MCF 10A (cell line): ENCODE measurements at regions of chr17 and their contacts with region 1.

Region 1: GRCh38 chr17:50297407-50297865 is 23.2 kb downstream of the TMEM92 start:
- DNase-seq: peak; percentile 84
- H3K4me3 Mint-ChIP-seq: no peak overlapping the region
- H3K27ac Mint-ChIP-seq: no peak overlapping the region
- H3K4me1 Mint-ChIP-seq: no peaks in the 10 kb centered on the region
- H3K27me3 Mint-ChIP-seq: no peaks in the 10 kb centered on the region
- CTCF ChIP-seq: peak; percentile 99

Region 2: DNA sequence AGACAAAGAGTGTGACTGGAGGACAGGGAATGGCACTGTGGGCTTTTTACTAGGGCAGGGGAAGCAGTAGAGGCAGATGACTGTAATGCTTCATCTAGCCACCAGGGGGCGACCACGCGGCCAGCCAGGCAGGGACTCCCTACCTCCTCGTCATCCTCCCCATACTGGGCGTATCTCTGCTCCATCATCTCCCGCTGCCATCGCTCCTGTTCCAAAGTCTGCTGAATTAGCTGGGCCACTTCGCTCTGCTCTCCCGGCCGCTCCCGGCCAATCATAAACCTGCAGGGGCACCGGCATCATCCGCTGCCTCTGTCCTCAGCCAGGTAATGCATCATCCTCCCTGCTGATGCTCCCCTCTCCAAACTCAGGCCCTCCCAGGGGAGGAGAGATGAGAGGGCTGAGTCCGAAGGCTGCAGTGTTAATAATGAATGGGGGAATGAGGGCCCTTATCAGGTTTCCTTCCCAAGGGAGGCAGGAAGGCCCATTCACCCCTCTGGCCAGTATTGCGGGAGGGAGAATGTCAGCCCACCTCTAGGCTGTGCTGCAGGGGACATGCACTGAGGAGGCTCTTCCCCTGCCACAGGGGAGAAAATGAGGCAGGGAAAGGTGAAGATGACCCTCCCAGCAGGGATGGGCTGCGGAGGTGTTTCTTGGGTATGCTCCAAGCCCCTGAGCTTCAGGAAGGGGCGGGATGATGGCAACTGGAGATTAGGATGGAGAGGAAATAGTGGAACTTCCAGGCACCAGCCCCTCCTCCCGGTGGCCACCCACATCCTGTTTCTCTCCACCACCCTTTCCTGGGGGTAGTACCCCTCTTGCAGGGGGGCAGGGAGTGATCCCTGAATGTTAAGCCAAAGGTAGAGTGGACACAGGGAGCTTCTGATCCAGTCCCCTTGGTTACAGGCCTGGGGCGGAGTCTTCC is 157.2 kb before region 1 on chr17:
- CTCF ChIA-PET with region 1: interaction called, 10 read pairs
- POLR2A ChIA-PET with region 1: no interaction called
- intact Hi-C with region 1: no loop called
- DNase-seq: peak; percentile 73
- H3K4me3 Mint-ChIP-seq: no peak overlapping the region
- H3K27ac Mint-ChIP-seq: no peak overlapping the region
- H3K4me1 Mint-ChIP-seq: peaks cover 13% of the 10 kb centered on the region
- H3K27me3 Mint-ChIP-seq: no peaks in the 10 kb centered on the region
- CTCF ChIP-seq: peak; percentile 91

Region 3: DNA sequence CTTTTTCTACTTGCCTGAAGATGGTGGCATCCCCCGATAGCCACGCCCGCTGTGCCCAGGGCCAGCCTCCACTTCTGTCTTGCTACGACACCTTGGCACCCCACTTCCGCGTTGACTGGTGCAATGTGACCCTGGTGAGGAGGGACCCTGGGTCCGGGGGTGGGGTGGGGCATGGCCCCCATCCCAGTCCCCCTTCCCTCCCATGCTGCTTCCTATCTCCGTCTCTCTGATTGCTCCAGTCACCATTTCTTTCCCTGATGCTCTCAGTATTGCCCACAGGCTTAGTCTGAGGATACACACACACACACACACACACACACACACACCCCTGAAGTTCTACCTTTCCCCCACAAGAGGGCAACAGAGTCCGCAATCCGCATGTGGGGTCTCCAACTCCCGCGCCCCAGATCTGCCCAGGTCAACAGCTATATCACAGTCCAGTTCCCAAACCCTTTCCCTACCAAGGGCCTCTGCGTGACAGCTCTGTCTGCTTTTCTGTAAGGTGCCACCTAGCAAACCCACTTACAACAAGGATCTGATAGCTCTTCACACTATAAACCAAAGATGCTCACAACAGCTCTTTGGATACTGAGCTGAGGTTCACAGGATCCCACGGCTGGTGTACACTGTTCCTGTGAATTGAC is 128.2 kb before region 1 on chr17:
- CTCF ChIA-PET with region 1: interaction called, 47 read pairs
- POLR2A ChIA-PET with region 1: interaction called, 3 read pairs
- intact Hi-C with region 1: loop called (anchors 1 kb)
- DNase-seq: peak; percentile 68
- H3K4me3 Mint-ChIP-seq: no peak overlapping the region
- H3K27ac Mint-ChIP-seq: no peak overlapping the region
- H3K4me1 Mint-ChIP-seq: peaks cover 21% of the 10 kb centered on the region
- H3K27me3 Mint-ChIP-seq: no peaks in the 10 kb centered on the region
- CTCF ChIP-seq: peak; percentile 69

Region 4: DNA sequence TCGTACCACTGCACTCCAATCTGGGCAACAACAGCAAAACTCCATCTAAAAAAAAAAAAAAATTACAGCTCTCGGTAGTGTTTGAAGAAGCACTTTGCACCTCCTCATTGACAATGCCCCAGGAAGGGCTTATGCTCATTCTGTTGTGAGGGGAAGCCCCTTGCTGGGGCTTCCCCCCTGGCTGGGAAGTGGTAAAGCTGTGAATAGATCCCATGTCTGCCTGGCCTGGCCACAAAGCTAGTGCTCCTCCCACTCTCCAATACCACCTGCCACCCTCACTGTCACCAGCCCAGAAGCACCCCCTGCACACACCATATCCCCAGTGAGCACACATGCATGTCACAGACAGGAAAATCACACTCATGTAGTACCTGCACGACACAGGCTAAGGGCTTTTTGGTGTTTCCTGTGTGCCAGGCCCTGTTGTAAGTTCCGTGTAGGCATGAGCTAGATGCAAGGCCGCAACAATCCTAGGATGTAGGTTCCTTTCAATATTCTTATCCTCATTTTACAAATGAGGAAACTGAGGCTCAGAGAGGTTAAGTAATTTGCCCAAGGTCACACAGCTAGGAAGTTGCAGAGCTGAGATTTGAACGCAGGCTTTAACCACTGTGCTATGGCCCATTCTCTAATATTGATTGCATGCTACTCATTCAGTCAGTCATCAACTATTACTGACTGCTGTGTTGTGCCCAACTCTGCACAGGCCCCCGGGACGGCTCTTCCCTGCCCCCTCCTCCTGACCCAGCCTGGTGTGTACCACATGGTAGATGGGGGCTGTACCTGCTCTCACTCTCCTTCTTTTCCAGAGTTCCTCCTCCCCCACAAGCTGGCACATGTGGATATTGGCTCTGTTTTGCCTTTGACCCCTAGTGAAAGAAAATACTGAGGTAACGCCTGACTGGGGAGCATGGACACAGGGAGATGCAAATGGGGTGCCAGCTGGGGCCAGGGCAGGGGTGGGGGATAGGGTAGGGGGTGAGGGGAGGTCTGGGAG is 84.1 kb before region 1 on chr17:
- CTCF ChIA-PET with region 1: interaction called, 15 read pairs
- POLR2A ChIA-PET with region 1: no interaction called
- intact Hi-C with region 1: no loop called
- DNase-seq: no peak
- H3K4me3 Mint-ChIP-seq: no peak overlapping the region
- H3K27ac Mint-ChIP-seq: no peak overlapping the region
- H3K4me1 Mint-ChIP-seq: peaks cover 25% of the 10 kb centered on the region
- H3K27me3 Mint-ChIP-seq: no peaks in the 10 kb centered on the region
- CTCF ChIP-seq: no peak

Region 5: GRCh38 chr17:50269477-50270434 is 27.7 kb before region 1 on chr17:
- CTCF ChIA-PET with region 1: interaction called, 162 read pairs
- POLR2A ChIA-PET with region 1: no interaction called
- intact Hi-C with region 1: loop called (anchors 1 kb)
- DNase-seq: peak; percentile 74
- H3K4me3 Mint-ChIP-seq: no peak overlapping the region
- H3K27ac Mint-ChIP-seq: no peak overlapping the region
- H3K4me1 Mint-ChIP-seq: peaks cover 30% of the 10 kb centered on the region
- H3K27me3 Mint-ChIP-seq: no peaks in the 10 kb centered on the region
- CTCF ChIP-seq: peak; percentile 57

Region 6: DNA sequence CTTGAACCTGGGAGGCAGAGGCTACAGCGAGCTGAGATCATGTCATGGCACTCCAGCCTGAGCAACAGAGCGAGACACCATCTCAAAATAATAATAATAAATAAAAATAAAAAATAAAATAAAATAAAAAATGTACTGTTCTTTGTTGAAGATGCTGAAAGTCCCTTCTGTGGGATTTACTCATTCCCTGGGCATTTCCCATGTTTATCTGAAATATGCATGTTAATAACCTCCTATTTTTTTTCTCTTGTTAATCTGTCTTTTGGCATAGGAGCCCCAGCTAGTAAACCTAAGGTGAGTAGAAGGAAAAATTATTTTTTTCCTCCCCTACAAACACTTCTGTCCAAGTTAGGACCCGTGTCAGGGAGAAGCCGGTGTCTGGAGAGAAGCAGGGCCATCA is 11.2 kb after region 1 on chr17:
- CTCF ChIA-PET with region 1: interaction called, 11 read pairs
- POLR2A ChIA-PET with region 1: interaction called, 3 read pairs
- intact Hi-C with region 1: no loop called
- DNase-seq: no peak
- H3K4me3 Mint-ChIP-seq: no peak overlapping the region
- H3K27ac Mint-ChIP-seq: no peak overlapping the region
- H3K4me1 Mint-ChIP-seq: no peaks in the 10 kb centered on the region
- H3K27me3 Mint-ChIP-seq: peaks cover 12% of the 10 kb centered on the region
- CTCF ChIP-seq: no peak